ENCODE measurements at regions of chr7 and their contacts with region 1.

Region 1: GRCh38 chr7:2734751-2735571 is 47.0 kb downstream of the AMZ1 start:
- DNase-seq: no peak
- ATAC-seq: no peak; the same call in 2 of the 3 replicates
- H3K4me3 ChIP-seq: no peak overlapping the region
- H3K27ac ChIP-seq: no peak overlapping the region
- H3K4me1 ChIP-seq: peaks cover 11% of the 10 kb centered on the region; the same call in 1 of the 2 replicates
- H3K27me3 ChIP-seq: no peaks in the 10 kb centered on the region
- CTCF ChIP-seq: no peak
- EP300 ChIP-seq: no peak
- POLR2A ChIP-seq: no peak
- RAD21 ChIP-seq: no peak

Region 2: GRCh38 chr7:2698581-2699288 is 36.2 kb before region 1 on chr7:
- CTCF ChIA-PET with region 1: no interaction called
- POLR2A ChIA-PET with region 1: no interaction called
- in situ Hi-C with region 1: no loop called
- intact Hi-C with region 1: no loop called
- DNase-seq: no peak
- ATAC-seq: no peak
- H3K4me3 ChIP-seq: no peak overlapping the region
- H3K27ac ChIP-seq: no peak overlapping the region
- H3K4me1 ChIP-seq: peaks cover 6% of the 10 kb centered on the region; the same call in 1 of the 2 replicates
- H3K27me3 ChIP-seq: peaks cover 21 to 54% of the 10 kb centered on the region in 2 experiments; a peak in 3 of 5 replicates
- CTCF ChIP-seq: no peak
- EP300 ChIP-seq: no peak
- POLR2A ChIP-seq: no peak
- RAD21 ChIP-seq: no peak

Region 3: DNA sequence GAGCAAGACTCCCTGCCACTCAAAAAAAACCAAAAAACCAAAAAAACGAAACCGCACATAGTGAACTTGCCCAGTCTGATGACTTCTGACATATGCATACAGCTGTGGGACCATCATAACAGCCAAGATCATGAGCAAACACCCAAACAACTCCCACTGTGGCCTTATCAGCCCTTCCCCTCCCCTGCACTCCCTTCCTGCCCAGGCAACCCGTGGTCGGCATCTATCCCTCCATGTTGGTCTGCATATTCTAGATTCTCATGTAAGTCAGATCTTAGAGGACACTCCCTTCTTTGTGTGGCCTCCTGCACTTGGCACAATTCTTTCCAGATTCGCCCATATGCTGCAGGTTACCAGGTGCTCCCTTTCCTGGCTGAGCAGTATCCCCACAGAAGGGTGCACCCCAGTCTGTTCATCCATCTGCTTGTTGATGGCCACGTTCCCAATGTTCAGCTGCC is 36.3 kb after region 1 on chr7:
- CTCF ChIA-PET with region 1: no interaction called
- POLR2A ChIA-PET with region 1: no interaction called
- in situ Hi-C with region 1: no loop called
- intact Hi-C with region 1: loop called (anchors 1 kb)
- DNase-seq: no peak
- ATAC-seq: no peak
- H3K4me3 ChIP-seq: no peak overlapping the region
- H3K27ac ChIP-seq: no peak overlapping the region
- H3K4me1 ChIP-seq: no peaks in the 10 kb centered on the region
- H3K27me3 ChIP-seq: no peaks in the 10 kb centered on the region
- CTCF ChIP-seq: no peak
- EP300 ChIP-seq: no peak
- POLR2A ChIP-seq: no peak
- RAD21 ChIP-seq: no peak

Region 4: DNA sequence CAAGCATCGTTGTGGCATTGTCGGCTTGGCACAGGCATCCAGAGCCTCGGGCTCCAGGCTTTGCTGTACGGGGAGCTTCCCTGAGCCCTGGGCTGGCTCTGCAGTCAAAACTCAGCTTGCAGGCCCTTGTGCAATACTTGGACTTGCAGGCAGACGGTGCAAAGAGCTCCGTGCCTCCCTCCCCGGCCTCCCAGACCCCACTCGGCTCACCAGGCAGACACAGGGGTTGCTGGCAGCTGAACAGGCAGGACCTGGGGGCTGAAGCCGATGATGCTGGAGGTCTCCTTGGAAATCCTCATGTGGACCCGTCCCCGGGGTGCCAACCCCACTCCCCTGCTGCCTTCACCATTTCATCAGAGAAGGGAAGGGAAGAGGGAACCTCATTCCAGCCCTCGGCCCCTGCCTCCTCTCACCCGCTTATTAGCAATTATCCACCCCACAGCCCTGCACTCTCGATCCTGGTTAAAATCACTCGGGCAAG is 168.8 kb after region 1 on chr7:
- CTCF ChIA-PET with region 1: no interaction called
- POLR2A ChIA-PET with region 1: no interaction called
- in situ Hi-C with region 1: no loop called
- intact Hi-C with region 1: no loop called
- DNase-seq: peak; percentile 36
- ATAC-seq: peak; percentile 81
- H3K4me3 ChIP-seq: peak overlapping the region; percentile 37 to 57 (median 38)
- H3K27ac ChIP-seq: no peak overlapping the region
- H3K4me1 ChIP-seq: peaks cover 34% of the 10 kb centered on the region
- H3K27me3 ChIP-seq: peaks cover 1 to 26% of the 10 kb centered on the region in 2 experiments; a peak in 2 of 5 replicates
- CTCF ChIP-seq: peak; percentile 37; the same call in 1 of the 2 replicates
- EP300 ChIP-seq: no peak
- POLR2A ChIP-seq: 0 out of 4 replicates have a peak, but pooled peaks of 1 of the 2 experiments have one; percentile 1
- RAD21 ChIP-seq: no peak

Measured in HepG2 (cell line).